HCT116 (cell line): ENCODE measurements at regions of chr17 and their contacts with region 1.

Region 1: DNA sequence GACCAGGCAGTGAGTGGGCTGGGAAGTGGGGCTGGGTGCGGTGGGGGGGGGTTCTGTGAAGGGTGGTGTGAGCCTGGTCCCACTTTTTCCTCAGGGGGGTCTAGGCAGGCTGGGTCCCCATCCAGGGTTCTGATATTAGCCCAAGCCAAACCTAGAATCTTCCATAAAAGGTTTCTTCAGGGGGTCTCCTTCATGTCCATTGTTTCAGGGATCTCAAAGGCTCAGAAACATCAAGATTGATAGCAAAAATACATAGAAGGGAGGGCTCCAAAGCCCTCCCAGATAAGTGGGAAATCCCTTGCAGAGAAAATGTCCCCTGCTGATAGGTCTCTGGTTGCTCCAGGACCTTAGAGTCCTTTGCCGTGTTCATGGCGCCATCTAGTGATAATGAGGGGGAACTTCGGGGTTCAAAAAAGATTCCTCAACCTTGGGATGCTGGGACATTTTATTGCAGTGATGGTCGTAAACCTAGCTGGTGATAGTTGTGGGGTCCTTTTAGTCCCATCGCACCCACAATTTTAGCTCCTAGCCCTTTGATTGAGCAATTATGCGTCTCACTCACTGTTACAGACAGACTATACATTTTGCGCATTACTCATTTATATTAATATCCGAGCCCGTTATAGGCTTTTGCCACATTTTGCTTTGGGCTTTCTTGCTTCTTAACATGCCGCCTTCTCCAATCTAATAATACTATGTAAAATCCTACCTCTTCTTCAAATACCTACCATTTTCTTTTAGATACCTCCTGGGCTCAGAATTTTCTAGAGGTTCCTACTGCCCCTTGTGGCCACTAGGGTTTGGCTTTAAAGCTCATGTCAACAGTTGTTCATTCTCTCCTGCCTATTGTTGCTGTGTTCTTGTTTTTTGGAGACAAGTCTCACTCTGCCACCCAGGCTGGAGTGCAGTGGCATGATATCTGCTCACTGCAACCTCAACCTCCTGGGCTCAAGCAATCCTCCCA is 35.1 kb downstream of the IGF2BP1 start:
- DNase-seq: peak; percentile 82
- ATAC-seq: peak; percentile 67
- H3K4me3 ChIP-seq: peak overlapping the region; percentile 6 to 13; a peak in 2 of 4 replicates
- H3K27ac ChIP-seq: peak overlapping the region; percentile 25; the same call in 1 of the 2 replicates
- H3K4me1 ChIP-seq: peaks cover 12 to 25% of the 10 kb centered on the region in 2 experiments
- H3K27me3 ChIP-seq: no peaks in the 10 kb centered on the region
- CTCF ChIP-seq: peak; percentile 79 to 98 (median 92)
- POLR2A ChIP-seq: no peak
- RAD21 ChIP-seq: peak; percentile 100

Region 2: DNA sequence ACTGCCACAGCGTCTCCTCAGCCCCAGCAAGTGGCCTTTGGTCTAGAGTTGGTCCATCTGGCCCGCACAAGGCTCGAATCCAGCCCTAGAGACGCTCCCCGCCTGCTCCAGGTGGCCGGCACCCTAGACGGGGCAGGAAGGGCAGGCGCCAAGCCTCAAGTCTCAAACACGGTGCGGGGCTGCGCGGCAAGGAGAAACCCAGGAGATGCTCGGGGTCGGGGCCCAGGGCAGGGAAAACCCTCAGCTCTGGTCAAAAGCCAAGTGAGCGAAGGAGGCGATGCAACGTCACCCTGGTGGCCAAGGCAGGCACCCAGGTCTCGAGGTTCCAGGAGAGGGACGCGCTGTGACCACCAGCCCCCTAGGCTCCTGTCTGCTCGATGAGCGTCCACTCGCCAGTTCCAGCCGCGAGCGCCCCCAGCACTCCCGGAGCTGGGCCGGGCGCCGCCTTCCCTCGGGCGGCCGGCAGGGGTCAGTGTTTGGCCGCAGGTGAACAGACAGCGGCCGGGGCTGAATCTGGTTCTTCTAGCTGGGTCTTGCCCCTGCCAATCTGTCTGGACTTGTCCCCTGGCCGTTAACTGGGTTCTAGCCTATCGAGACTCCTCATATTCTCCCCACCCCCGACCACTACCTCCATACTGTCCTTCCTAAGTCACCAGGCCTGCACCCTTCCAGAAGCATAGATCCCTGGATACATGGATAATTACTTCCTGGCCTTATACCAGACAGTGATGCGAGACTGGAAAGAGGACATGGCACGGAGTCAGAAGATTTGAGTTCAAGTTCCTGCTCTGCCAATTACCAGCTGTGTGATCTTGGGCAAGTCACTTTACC is 353.9 kb before region 1 on chr17:
- CTCF ChIA-PET with region 1: interaction called, 14 read pairs
- POLR2A ChIA-PET with region 1: no interaction called
- RAD21 ChIA-PET with region 1: interaction called in 1 of 2 experiments, 3 read pairs
- intact Hi-C with region 1: loop called (anchors 2 kb)
- DNase-seq: peak; percentile 28
- ATAC-seq: peak; percentile 97
- H3K4me3 ChIP-seq: peak overlapping the region; percentile 12 to 26; a peak in 2 of 4 replicates
- H3K27ac ChIP-seq: peak overlapping the region; percentile 12; the same call in 1 of the 2 replicates
- H3K4me1 ChIP-seq: peaks cover 0 to 13% of the 10 kb centered on the region in 2 experiments; a peak in 2 of 4 replicates
- H3K27me3 ChIP-seq: no peaks in the 10 kb centered on the region
- CTCF ChIP-seq: peak; percentile 99 to 100 (median 99)
- POLR2A ChIP-seq: no peak
- RAD21 ChIP-seq: peak; percentile 98

Region 3: GRCh38 chr17:48816774-48817590 is 215.3 kb before region 1 on chr17 and contains the start of gene TTLL6:
- CTCF ChIA-PET with region 1: interaction called, 62 read pairs
- POLR2A ChIA-PET with region 1: interaction called, 3 read pairs
- RAD21 ChIA-PET with region 1: interaction called in 1 of 2 experiments, 3 read pairs
- intact Hi-C with region 1: loop called (anchors 1 kb)
- DNase-seq: peak; percentile 89
- ATAC-seq: peak; percentile 98
- H3K4me3 ChIP-seq: peak within 1 kb of the TSS; percentile 41 to 59
- H3K27ac ChIP-seq: no peak within 1 kb of the TSS; the same call in 1 of the 2 replicates
- H3K4me1 ChIP-seq: peaks cover 9 to 17% of the 10 kb centered on the region in 2 experiments
- H3K27me3 ChIP-seq: no peaks in the 10 kb centered on the region
- CTCF ChIP-seq: no peak
- POLR2A ChIP-seq: no peak
- RAD21 ChIP-seq: no peak
- total RNA-seq, gene TTLL6: 0.79 TPM

Region 4: GRCh38 chr17:48908047-48908843 is 124.0 kb before region 1 on chr17 and contains the start of gene UBE2Z:
- CTCF ChIA-PET with region 1: interaction called, 14 read pairs
- POLR2A ChIA-PET with region 1: no interaction called
- RAD21 ChIA-PET with region 1: interaction called in 1 of 2 experiments, 4 read pairs
- intact Hi-C with region 1: no loop called
- DNase-seq: peak; percentile 94
- ATAC-seq: peak; percentile 92
- H3K4me3 ChIP-seq: peak within 1 kb of the TSS; percentile 70 to 84
- H3K27ac ChIP-seq: peak within 1 kb of the TSS; percentile 92
- H3K4me1 ChIP-seq: peaks cover 18 to 26% of the 10 kb centered on the region in 2 experiments
- H3K27me3 ChIP-seq: no peaks in the 10 kb centered on the region
- CTCF ChIP-seq: 0 out of 6 replicates have a peak, but pooled peaks of 1 of the 3 experiments have one; percentile 9
- POLR2A ChIP-seq: peak; percentile 94
- RAD21 ChIP-seq: no peak
- total RNA-seq, gene UBE2Z: 119 TPM

Region 5: DNA sequence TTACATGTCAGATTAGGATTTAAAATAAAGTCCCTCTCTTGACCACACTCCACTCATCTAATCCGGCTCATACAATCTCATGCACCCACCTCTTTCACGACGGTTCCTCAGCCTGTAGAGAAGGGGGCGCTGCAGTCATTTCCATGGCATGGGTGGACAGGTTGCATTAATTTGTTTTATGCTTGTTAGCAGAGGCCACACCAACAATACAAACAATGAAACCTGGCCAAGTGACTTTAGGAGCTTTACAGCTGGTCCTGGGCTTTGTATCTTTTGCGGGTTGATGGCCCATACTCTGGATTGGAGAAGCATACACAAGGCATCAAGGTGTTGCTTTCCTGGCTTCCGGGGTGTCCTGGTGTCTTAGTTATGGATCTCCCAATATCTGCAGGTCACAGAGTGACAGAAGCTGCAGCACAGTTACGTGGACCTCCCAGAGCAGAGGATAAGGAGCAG is 77.9 kb before region 1 on chr17:
- CTCF ChIA-PET with region 1: interaction called, 43 read pairs
- POLR2A ChIA-PET with region 1: no interaction called
- RAD21 ChIA-PET with region 1: interaction called, 10 to 18 read pairs
- intact Hi-C with region 1: loop called (anchors 1 kb)
- DNase-seq: peak; percentile 69
- ATAC-seq: peak; percentile 99
- H3K4me3 ChIP-seq: no peak overlapping the region
- H3K27ac ChIP-seq: no peak overlapping the region
- H3K4me1 ChIP-seq: peaks cover 0 to 8% of the 10 kb centered on the region in 2 experiments; a peak in 2 of 4 replicates
- H3K27me3 ChIP-seq: no peaks in the 10 kb centered on the region
- CTCF ChIP-seq: peak; percentile 89 to 98 (median 98)
- POLR2A ChIP-seq: no peak
- RAD21 ChIP-seq: peak; percentile 100

Region 6: DNA sequence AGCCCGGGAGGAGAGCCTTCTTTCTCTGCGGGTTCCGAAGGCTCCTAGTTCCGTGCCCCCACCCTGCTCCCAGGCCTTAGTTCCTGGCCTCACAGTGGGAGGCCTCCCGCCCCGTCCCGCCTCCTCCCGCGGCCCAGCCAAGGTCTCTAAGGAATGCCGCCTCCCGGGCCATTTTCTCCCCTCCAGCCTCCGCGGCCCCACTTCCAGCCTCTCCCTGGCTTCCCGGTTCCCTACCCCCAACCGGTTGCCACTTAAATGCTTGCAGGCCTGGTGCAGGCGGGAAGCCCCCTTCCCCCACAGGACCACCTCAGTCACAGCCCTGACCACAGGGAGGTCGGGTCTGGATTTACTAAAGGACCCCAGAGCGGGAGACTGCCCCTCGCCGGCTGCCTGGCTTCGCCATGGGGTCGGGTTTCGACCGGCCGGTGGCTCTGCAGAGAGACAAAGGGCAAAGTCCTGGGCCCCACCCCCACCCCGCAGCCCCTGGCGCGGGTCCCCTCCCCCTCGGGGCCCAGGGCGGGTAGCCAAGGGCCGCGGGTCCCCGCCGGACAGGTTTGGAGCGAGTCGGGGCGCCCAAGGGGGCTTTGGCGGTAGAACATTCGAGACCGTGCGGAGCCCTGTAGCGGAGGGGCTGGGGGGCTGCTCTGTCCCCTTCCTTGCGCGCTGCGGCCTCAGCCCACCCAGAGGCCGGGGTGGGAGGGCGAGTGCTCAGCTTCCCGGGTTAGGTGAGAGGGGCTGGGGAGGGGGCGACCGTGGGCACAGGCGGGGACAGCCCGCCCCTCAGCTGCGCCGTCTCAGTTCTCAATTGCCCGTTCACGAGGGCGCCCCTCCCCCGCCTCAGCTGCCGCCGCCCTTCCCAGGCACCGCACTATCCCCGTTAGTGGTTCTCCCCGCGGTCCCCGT is 18.7 kb before region 1 on chr17:
- CTCF ChIA-PET with region 1: interaction called, 10 read pairs
- POLR2A ChIA-PET with region 1: no interaction called
- RAD21 ChIA-PET with region 1: interaction called, 4 to 6 read pairs
- intact Hi-C with region 1: loop called (anchors 1 kb)
- DNase-seq: no peak
- ATAC-seq: peak; percentile 4; the same call in 1 of the 2 replicates
- H3K4me3 ChIP-seq: no peak overlapping the region; a peak in 1 of 4 replicates
- H3K27ac ChIP-seq: no peak overlapping the region
- H3K4me1 ChIP-seq: peaks cover 13 to 29% of the 10 kb centered on the region in 2 experiments
- H3K27me3 ChIP-seq: no peaks in the 10 kb centered on the region; the same call in 1 of the 2 replicates
- CTCF ChIP-seq: no peak
- POLR2A ChIP-seq: no peak
- RAD21 ChIP-seq: no peak

Region 7: DNA sequence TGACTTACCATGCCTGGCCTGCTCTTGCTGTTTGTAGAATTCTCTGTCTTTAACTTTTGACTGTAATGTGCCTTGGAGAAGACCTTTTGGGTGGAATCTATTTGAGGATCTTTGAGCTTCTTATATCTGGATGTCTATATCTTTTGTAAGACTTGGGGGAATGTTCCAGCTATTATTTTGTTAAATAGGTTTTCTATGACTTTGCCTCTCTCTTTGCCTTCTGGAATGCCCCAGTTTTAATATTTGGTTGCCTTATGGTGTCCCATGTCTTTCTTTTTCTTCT is 392.7 kb after region 1 on chr17:
- CTCF ChIA-PET with region 1: no interaction called
- POLR2A ChIA-PET with region 1: no interaction called
- RAD21 ChIA-PET with region 1: no interaction called
- intact Hi-C with region 1: no loop called
- DNase-seq: no peak
- ATAC-seq: no peak
- H3K4me3 ChIP-seq: no peak overlapping the region
- H3K27ac ChIP-seq: no peak overlapping the region
- H3K4me1 ChIP-seq: no peaks in the 10 kb centered on the region
- H3K27me3 ChIP-seq: no peaks in the 10 kb centered on the region
- CTCF ChIP-seq: no peak
- POLR2A ChIP-seq: no peak
- RAD21 ChIP-seq: no peak

Region 8: GRCh38 chr17:49439673-49440571 is 407.7 kb after region 1 on chr17:
- CTCF ChIA-PET with region 1: no interaction called
- POLR2A ChIA-PET with region 1: no interaction called
- RAD21 ChIA-PET with region 1: no interaction called
- intact Hi-C with region 1: no loop called
- DNase-seq: no peak
- ATAC-seq: no peak
- H3K4me3 ChIP-seq: no peak overlapping the region
- H3K27ac ChIP-seq: no peak overlapping the region
- H3K4me1 ChIP-seq: no peaks in the 10 kb centered on the region
- H3K27me3 ChIP-seq: peaks cover 19% of the 10 kb centered on the region; the same call in 1 of the 2 replicates
- CTCF ChIP-seq: no peak
- POLR2A ChIP-seq: no peak
- RAD21 ChIP-seq: no peak